ENCODE measurements at regions of chr3 and their contacts with region 1.

Region 1: DNA sequence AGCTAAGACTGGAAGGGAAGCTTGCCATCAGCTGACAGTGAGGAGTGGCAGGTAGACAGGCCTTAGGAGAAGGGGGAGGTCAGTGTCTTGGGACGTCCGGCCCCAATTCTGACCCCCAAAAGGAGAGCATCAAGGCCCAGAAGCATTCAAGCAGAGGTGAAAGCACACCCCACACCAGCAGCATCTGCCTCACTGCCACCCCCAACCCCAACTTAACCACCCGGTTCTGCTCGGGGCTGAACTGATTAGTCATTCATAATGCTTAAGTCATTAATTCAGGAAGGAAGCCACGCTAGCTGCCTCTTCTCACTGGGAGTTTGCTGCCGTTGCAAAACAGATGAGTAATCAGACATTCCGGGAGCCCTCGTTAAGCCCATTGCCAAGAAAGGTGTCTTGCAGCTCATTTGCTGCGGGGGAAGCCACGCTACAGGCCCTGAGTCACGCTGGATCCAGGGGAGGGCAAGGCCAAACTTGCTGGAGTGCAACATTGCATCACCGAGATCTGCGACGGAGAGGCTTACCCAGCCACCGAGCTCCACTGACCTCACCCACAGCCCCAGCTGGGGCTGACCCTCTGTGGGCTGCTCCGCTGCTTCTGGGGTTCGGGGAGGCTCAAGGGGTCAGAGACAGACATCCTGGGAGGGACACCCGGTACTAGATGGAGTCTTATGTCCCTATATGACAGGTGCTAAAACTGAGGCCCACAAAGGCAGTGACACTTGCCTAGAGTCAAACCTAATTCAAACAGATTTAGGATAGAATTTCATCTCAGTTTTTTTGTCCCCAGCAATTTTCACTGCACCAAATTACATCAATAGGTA is 46.4 kb upstream of the HES1 start:
- DNase-seq: peak; percentile 33
- H3K4me3 Mint-ChIP-seq: peak overlapping the region; percentile 19
- H3K27ac Mint-ChIP-seq: peak overlapping the region; percentile 12
- H3K4me1 Mint-ChIP-seq: peaks cover 21% of the 10 kb centered on the region
- H3K27me3 Mint-ChIP-seq: peaks cover 4% of the 10 kb centered on the region

Region 2: GRCh38 chr3:194070634-194071409 is 18.7 kb before region 1 on chr3:
- intact Hi-C with region 1: loop called (anchors 2 kb)
- DNase-seq: peak; percentile 65
- H3K4me3 Mint-ChIP-seq: peak overlapping the region; percentile 46
- H3K27ac Mint-ChIP-seq: no peak overlapping the region
- H3K4me1 Mint-ChIP-seq: peaks cover 38% of the 10 kb centered on the region
- H3K27me3 Mint-ChIP-seq: peaks cover 60% of the 10 kb centered on the region

Region 3: GRCh38 chr3:194112120-194113106 is 22.8 kb after region 1 on chr3:
- intact Hi-C with region 1: no loop called
- DNase-seq: no peak
- H3K4me3 Mint-ChIP-seq: no peak overlapping the region
- H3K27ac Mint-ChIP-seq: no peak overlapping the region
- H3K4me1 Mint-ChIP-seq: no peaks in the 10 kb centered on the region
- H3K27me3 Mint-ChIP-seq: peaks cover 26% of the 10 kb centered on the region